PC-3 (cell line): ENCODE measurements at regions of chr13 and their contacts with region 1.

Region 1: GRCh38 chr13:66312312-66313087 is 917.6 kb downstream of the PCDH9 start:
- DNase-seq: peak; percentile 80
- ATAC-seq: peak; percentile 82
- H3K4me3 ChIP-seq: peak overlapping the region; percentile 52
- H3K27ac ChIP-seq: peak overlapping the region; percentile 96
- H3K4me1 ChIP-seq: peaks cover 38% of the 10 kb centered on the region
- H3K27me3 ChIP-seq: no peaks in the 10 kb centered on the region
- CTCF ChIP-seq: no peak

Region 2: DNA sequence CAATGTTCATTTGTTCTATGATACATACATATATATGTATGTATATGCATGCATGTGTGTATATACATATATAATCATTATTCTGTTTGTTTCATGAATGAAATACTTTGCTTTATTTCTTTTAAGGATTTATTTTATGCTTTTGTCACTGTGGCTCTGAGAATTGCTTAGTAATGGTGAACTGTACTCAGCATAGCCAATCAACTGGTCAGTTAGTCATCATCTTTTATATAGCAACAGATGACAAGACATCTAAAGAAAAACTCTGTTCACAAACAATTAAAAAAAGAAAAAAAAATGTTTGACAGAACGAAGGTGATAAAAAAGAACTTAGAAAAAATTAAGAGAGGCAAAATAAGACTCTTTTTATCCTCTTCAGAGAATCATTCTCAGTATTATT is 522.7 kb before region 1 on chr13:
- CTCF ChIA-PET with region 1: no interaction called
- POLR2A ChIA-PET with region 1: no interaction called
- intact Hi-C with region 1: no loop called
- DNase-seq: peak; percentile 35
- ATAC-seq: peak; percentile 42; the same call in 1 of the 2 replicates
- H3K4me3 ChIP-seq: no peak overlapping the region
- H3K27ac ChIP-seq: no peak overlapping the region
- H3K4me1 ChIP-seq: peaks cover 3% of the 10 kb centered on the region; the same call in 1 of the 2 replicates
- H3K27me3 ChIP-seq: no peaks in the 10 kb centered on the region
- CTCF ChIP-seq: no peak

Region 3: GRCh38 chr13:65926750-65927171 is 385.7 kb before region 1 on chr13:
- CTCF ChIA-PET with region 1: no interaction called
- POLR2A ChIA-PET with region 1: no interaction called
- intact Hi-C with region 1: loop called (anchors 5 kb)
- DNase-seq: peak; percentile 85
- ATAC-seq: peak; percentile 82
- H3K4me3 ChIP-seq: peak overlapping the region; percentile 51
- H3K27ac ChIP-seq: peak overlapping the region; percentile 42
- H3K4me1 ChIP-seq: peaks cover 39% of the 10 kb centered on the region
- H3K27me3 ChIP-seq: no peaks in the 10 kb centered on the region
- CTCF ChIP-seq: peak; percentile 69

Region 4: DNA sequence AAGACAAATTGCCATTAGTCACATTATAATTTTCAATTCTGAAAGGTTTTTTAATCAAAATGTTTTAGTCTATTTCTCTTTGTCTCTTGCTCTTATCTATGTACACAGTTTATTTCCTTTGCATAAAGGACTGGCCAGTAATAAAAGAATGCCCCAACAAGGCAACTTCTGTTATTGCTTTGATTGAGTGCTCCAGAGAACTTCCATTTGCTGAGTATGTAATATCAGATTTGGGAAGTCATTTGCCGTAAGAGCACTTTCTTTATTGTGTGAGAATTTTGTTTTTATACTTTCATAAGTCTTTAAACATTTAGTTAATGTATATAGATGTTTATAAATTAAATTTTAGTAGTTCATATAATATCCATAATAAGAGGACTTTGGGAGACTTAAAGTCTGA is 222.8 kb before region 1 on chr13:
- CTCF ChIA-PET with region 1: no interaction called
- POLR2A ChIA-PET with region 1: no interaction called
- intact Hi-C with region 1: no loop called
- DNase-seq: no peak
- ATAC-seq: no peak
- H3K4me3 ChIP-seq: no peak overlapping the region
- H3K27ac ChIP-seq: no peak overlapping the region
- H3K4me1 ChIP-seq: no peaks in the 10 kb centered on the region
- H3K27me3 ChIP-seq: no peaks in the 10 kb centered on the region
- CTCF ChIP-seq: no peak

Region 5: GRCh38 chr13:66353664-66354063 is 41.2 kb after region 1 on chr13:
- CTCF ChIA-PET with region 1: no interaction called
- POLR2A ChIA-PET with region 1: no interaction called
- intact Hi-C with region 1: loop called (anchors 1 kb)
- DNase-seq: peak; percentile 24
- ATAC-seq: peak; percentile 87
- H3K4me3 ChIP-seq: no peak overlapping the region
- H3K27ac ChIP-seq: no peak overlapping the region
- H3K4me1 ChIP-seq: no peaks in the 10 kb centered on the region
- H3K27me3 ChIP-seq: no peaks in the 10 kb centered on the region
- CTCF ChIP-seq: no peak; the same call in 1 of the 2 replicates

Region 6: DNA sequence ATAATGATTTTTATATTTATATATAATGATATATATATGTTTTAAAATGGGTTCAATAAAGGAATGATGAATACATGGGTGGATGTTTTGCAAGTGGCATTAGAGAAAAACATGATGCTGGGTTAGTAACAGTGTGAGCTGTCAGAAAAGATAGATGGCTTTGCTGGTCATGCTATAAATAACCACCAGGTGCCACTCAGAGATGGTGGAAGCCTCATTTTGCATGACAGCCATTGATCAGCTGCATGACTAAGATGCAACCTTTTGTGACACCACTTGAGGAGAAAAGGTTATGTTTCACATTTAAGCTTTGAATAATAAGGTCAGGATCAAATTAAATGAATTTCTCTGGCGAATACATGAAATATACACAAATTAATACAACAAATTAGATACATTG is 180.0 kb after region 1 on chr13:
- CTCF ChIA-PET with region 1: no interaction called
- POLR2A ChIA-PET with region 1: no interaction called
- intact Hi-C with region 1: loop called (anchors 5 kb)
- DNase-seq: peak; percentile 17
- ATAC-seq: peak; percentile 70
- H3K4me3 ChIP-seq: no peak overlapping the region
- H3K27ac ChIP-seq: no peak overlapping the region
- H3K4me1 ChIP-seq: no peaks in the 10 kb centered on the region
- H3K27me3 ChIP-seq: no peaks in the 10 kb centered on the region
- CTCF ChIP-seq: peak; percentile 53